Naive thymus-derived CD4-positive, alpha-beta T cell (primary cell): ENCODE measurements at regions of chr14 and their contacts with region 1.

Region 1: DNA sequence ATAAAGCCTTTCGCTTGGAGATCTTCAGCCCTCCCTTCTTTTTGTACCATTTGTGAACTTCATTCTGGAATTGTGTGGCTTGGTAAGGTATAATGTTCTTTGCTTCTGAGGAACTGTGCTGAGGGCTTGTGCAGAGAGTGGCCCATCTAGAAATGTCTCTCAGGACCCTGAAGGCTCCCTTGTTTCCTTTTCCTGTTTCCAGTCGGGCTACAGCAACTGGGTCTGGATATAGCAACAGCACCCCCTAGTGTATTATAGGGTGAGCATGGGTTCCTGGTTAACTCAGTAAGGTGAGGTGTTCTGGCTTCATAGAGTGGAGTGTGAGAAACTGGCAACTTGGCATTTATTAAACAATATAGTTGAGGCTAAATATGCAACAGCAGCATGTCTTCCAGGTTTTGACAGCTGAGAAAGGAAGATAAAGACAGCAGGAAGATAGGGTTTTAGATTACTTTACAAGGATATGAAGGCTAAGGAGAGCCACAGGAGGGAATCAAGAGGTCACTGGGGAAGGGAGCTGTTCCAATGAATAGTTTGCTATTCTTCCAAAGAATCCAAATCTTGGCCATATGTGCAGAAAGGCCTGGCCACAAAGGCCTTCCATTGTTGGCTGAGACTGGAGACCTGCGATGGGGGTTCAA is 49.1 kb upstream of the RNU6-8 start:
- DNase-seq: peak in 8 of 9 donors; percentile 27 to 77 (median 69)
- ATAC-seq: peak; percentile 93
- H3K4me3 ChIP-seq: no peak overlapping the region
- H3K4me3 Mint-ChIP-seq: no peak overlapping the region
- H3K27ac ChIP-seq: no peak overlapping the region
- H3K27ac Mint-ChIP-seq: no peak overlapping the region
- H3K4me1 ChIP-seq: no peaks in the 10 kb centered on the region
- H3K4me1 Mint-ChIP-seq: no peaks in the 10 kb centered on the region
- H3K27me3 ChIP-seq: no peaks in the 10 kb centered on the region
- H3K27me3 Mint-ChIP-seq: no peaks in the 10 kb centered on the region

Region 2: DNA sequence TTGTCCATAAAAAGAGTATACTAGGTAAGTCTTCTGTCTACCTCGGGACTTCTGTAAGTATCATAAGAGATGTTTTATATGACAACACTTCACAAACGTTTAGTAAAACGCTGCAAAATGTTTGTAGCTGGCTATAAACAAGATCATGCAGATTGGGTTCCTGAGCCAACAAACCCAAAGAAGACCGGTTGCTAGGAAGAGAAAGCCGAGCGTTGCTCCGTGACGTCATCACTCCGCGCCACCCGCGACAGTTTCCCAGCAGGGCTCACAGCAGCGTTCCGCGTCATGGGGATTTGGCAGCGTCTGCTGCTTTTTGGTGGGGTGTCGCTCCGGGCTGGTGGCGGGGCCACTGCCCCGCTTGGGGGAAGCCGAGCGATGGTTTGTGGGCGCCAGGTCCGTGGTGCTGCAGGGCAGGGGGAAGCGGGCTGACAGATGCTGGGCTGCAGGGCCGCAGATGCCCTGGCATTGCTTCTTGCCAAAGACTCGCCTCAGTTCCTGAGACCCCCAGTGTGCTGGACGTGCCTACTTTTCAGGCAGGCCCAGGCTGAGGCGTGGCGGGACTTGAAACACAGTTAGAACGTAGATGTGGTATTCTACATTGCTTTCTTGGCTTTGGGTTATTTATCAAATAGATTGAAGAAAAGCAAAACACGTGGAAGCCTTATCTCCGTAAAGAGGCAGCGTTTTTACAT is 690.8 kb before region 1 on chr14 and contains the start of gene NUBPL:
- CTCF ChIA-PET with region 1: interaction called, 4 read pairs
- POLR2A ChIA-PET with region 1: no interaction called
- intact Hi-C with region 1: loop called in 1 of 2 experiments (anchors 2 kb)
- DNase-seq: peak; percentile 96 to 98 (median 97)
- ATAC-seq: peak; percentile 95
- H3K4me3 ChIP-seq: peak within 1 kb of the TSS; percentile 90
- H3K4me3 Mint-ChIP-seq: peak within 1 kb of the TSS; percentile 88 to 98 (median 96)
- H3K27ac ChIP-seq: peak within 1 kb of the TSS; percentile 81
- H3K27ac Mint-ChIP-seq: peak within 1 kb of the TSS; percentile 95 to 100 (median 99)
- H3K4me1 ChIP-seq: peaks cover 0 to 5% of the 10 kb centered on the region in 2 donors
- H3K4me1 Mint-ChIP-seq: peaks cover 24 to 44% (median 38%) of the 10 kb centered on the region in 7 donors
- H3K27me3 ChIP-seq: no peaks in the 10 kb centered on the region
- H3K27me3 Mint-ChIP-seq: peaks cover 0 to 11% (median 5%) of the 10 kb centered on the region in 5 donors
- total RNA-seq, gene NUBPL: 6.1 to 11.7 (median 8.3) TPM

Region 3: GRCh38 chr14:31592631-31593030 is 659.5 kb before region 1 on chr14:
- CTCF ChIA-PET with region 1: no interaction called
- POLR2A ChIA-PET with region 1: no interaction called
- intact Hi-C with region 1: no loop called
- DNase-seq: no peak
- ATAC-seq: no peak
- H3K4me3 ChIP-seq: no peak overlapping the region
- H3K4me3 Mint-ChIP-seq: no peak overlapping the region
- H3K27ac ChIP-seq: no peak overlapping the region
- H3K27ac Mint-ChIP-seq: no peak overlapping the region
- H3K4me1 ChIP-seq: no peaks in the 10 kb centered on the region
- H3K4me1 Mint-ChIP-seq: peaks cover 0 to 12% (median 3%) of the 10 kb centered on the region in 7 donors
- H3K27me3 ChIP-seq: no peaks in the 10 kb centered on the region
- H3K27me3 Mint-ChIP-seq: no peaks in the 10 kb centered on the region

Region 4: DNA sequence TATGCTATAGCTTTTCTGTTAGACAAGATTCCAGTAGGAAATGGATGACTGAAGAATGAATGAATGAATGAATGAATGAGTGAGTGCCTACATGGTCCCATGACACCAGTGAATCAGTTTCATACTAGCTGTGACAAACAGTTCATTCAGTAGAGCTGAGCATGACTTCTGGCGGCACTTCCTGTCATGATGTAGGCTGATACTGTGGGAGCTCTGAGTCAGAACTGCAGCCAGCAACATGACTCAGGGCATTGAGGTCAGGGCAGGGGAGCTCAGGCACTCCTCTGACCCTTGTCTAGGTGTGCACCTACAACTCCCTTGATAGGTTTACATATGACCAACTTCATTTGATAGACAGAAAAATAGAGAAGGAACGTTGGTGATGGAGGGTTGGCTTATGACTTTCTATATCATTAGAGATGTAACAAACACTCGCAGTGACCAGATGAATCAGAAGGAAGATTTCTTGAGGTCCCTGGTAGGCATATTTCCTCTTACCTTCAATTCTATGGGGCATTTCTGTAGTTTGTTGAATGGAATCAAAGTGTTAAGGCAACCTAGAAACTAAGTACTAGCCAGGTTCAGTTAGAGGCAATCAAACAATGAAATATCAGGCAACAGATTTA is 314.3 kb before region 1 on chr14:
- CTCF ChIA-PET with region 1: interaction called, 41 read pairs
- POLR2A ChIA-PET with region 1: no interaction called
- intact Hi-C with region 1: loop called in 1 of 2 experiments (anchors 1 kb)
- DNase-seq: peak in 3 of 9 donors; percentile 10 to 66 (median 27)
- ATAC-seq: peak; percentile 92
- H3K4me3 ChIP-seq: no peak overlapping the region
- H3K4me3 Mint-ChIP-seq: no peak overlapping the region
- H3K27ac ChIP-seq: no peak overlapping the region
- H3K27ac Mint-ChIP-seq: peak overlapping the region in 4 of 9 donors; percentile 40 to 65 (median 54)
- H3K4me1 ChIP-seq: no peaks in the 10 kb centered on the region
- H3K4me1 Mint-ChIP-seq: peaks cover 4 to 29% (median 10%) of the 10 kb centered on the region in 7 donors
- H3K27me3 ChIP-seq: no peaks in the 10 kb centered on the region
- H3K27me3 Mint-ChIP-seq: no peaks in the 10 kb centered on the region

Region 5: DNA sequence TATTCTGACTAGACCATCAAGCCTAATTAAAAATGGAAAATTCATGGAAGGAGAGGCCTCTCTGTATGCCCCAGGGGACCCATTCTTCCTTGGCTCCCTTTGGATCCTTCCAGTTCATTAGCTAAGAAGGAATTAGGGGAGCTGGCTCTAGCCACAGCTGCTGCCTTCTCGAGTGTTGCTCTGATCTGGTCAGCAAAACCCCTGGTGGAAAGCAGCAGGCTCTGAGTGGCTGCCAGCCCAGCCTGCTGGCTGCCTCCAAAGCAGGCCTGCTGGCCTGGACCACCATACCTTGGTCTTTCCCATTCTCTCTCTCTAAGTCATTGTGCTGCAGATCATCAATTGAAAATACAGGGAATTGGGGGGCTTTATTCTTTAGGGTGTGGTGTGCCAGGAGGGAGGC is 48.0 kb after region 1 on chr14:
- CTCF ChIA-PET with region 1: no interaction called
- POLR2A ChIA-PET with region 1: no interaction called
- intact Hi-C with region 1: no loop called
- DNase-seq: no peak
- ATAC-seq: no peak
- H3K4me3 ChIP-seq: no peak overlapping the region
- H3K4me3 Mint-ChIP-seq: no peak overlapping the region
- H3K27ac ChIP-seq: no peak overlapping the region
- H3K27ac Mint-ChIP-seq: no peak overlapping the region
- H3K4me1 ChIP-seq: no peaks in the 10 kb centered on the region
- H3K4me1 Mint-ChIP-seq: no peaks in the 10 kb centered on the region
- H3K27me3 ChIP-seq: no peaks in the 10 kb centered on the region
- H3K27me3 Mint-ChIP-seq: no peaks in the 10 kb centered on the region

Region 6: GRCh38 chr14:32469388-32470160 is 217.4 kb after region 1 on chr14:
- CTCF ChIA-PET with region 1: no interaction called
- POLR2A ChIA-PET with region 1: no interaction called
- intact Hi-C with region 1: loop called in 1 of 2 experiments (anchors 2 kb)
- DNase-seq: peak in 3 of 9 donors; percentile 1 to 4 (median 3)
- ATAC-seq: no peak
- H3K4me3 ChIP-seq: no peak overlapping the region
- H3K4me3 Mint-ChIP-seq: no peak overlapping the region
- H3K27ac ChIP-seq: no peak overlapping the region
- H3K27ac Mint-ChIP-seq: no peak overlapping the region
- H3K4me1 ChIP-seq: no peaks in the 10 kb centered on the region
- H3K4me1 Mint-ChIP-seq: no peaks in the 10 kb centered on the region
- H3K27me3 ChIP-seq: no peaks in the 10 kb centered on the region
- H3K27me3 Mint-ChIP-seq: peaks cover 0 to 8% (median 0%) of the 10 kb centered on the region in 5 donors